ENCODE measurements at regions of chr22 and their contacts with region 1.

Region 1: DNA sequence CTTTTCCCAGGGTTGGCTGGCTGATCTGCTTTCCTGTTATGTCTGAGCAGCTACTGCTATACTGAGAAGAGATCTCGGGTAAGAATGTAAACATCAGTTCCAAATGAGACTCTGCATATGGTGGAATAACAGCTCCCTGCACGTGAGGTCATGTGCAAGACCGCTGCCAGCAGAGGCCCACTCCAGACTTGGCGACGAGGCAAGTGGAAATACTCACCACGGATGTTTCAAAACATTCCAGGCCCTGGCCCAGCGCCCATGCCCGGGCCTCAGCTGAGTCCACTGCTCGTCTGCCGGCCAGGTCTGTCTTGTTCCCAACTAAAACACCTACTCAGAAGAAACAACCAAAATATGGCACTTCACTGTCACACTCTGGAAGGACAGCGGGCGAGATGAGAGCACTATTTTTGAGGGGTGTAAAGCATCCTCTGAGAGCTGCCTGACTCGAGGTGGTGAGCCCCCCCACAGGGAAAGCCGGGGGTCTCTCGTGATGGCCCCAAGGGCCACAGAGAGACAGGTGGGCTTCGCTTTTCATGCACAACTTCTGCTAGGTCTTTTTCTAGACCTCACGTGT is 13.1 kb downstream of the IFT27 start:
- DNase-seq: peak in 1 of 6 donors; percentile 49
- ATAC-seq: no peak
- H3K4me3 ChIP-seq: no peak overlapping the region
- H3K27ac ChIP-seq: no peak overlapping the region
- H3K4me1 ChIP-seq: peaks cover 0 to 6% (median 5%) of the 10 kb centered on the region in 3 donors
- H3K27me3 ChIP-seq: no peaks in the 10 kb centered on the region
- CTCF ChIP-seq: no peak

Region 2: GRCh38 chr22:36552289-36552688 is 210.5 kb before region 1 on chr22:
- intact Hi-C with region 1: loop called in 2 of 3 experiments (anchors 10 kb)
- DNase-seq: no peak
- ATAC-seq: peak in 2 of 4 donors; percentile 19 to 29
- H3K4me3 ChIP-seq: no peak overlapping the region
- H3K27ac ChIP-seq: no peak overlapping the region
- H3K4me1 ChIP-seq: no peaks in the 10 kb centered on the region
- H3K27me3 ChIP-seq: no peaks in the 10 kb centered on the region
- CTCF ChIP-seq: no peak

Region 3: GRCh38 chr22:36860821-36861659 is 98.3 kb after region 1 on chr22 and contains the start of gene NCF4:
- intact Hi-C with region 1: no loop called
- DNase-seq: peak in 1 of 6 donors; percentile 68
- ATAC-seq: peak in 2 of 4 donors; percentile 60 to 64
- H3K4me3 ChIP-seq: peak within 1 kb of the TSS in 1 of 4 donors; percentile 8
- H3K27ac ChIP-seq: peak within 1 kb of the TSS in 2 of 4 donors; percentile 5 to 60
- H3K4me1 ChIP-seq: peaks cover 0 to 2% (median 0%) of the 10 kb centered on the region in 3 donors
- H3K27me3 ChIP-seq: no peaks in the 10 kb centered on the region
- CTCF ChIP-seq: no peak
- total RNA-seq, gene NCF4: 0.32 to 7.1 (median 1.8) TPM